Mammary epithelial cell (primary cell): ENCODE measurements at regions of chr19 and their contacts with region 1.

Region 1: DNA sequence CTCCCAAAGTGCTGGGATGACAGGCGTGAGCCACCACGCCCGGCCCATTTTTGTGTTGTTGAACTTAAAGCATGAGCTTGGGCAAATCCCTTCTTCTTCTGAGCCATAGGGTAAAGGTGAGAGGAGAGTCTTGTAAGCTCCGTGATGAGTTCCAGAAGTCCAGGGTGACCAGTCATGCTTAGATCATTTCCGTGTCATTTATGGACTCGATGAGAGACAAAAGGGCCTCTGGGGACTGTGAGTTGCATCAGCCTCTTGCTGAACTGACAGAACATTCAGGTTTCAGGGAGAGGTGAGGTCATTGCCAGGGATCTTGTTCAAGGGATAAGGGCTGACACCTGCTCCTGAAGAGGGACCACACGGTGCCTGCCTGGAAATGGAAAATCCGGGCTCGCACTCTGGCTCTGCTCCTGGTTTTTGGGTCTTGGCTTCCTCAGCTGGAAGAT is 53.6 kb downstream of the GADD45B start:
- DNase-seq: peak; percentile 98
- H3K4me3 ChIP-seq: no peak overlapping the region
- H3K27ac ChIP-seq: peak overlapping the region; percentile 49
- H3K4me1 ChIP-seq: peaks cover 45% of the 10 kb centered on the region
- H3K27me3 ChIP-seq: no peaks in the 10 kb centered on the region
- CTCF ChIP-seq: no peak

Region 2: DNA sequence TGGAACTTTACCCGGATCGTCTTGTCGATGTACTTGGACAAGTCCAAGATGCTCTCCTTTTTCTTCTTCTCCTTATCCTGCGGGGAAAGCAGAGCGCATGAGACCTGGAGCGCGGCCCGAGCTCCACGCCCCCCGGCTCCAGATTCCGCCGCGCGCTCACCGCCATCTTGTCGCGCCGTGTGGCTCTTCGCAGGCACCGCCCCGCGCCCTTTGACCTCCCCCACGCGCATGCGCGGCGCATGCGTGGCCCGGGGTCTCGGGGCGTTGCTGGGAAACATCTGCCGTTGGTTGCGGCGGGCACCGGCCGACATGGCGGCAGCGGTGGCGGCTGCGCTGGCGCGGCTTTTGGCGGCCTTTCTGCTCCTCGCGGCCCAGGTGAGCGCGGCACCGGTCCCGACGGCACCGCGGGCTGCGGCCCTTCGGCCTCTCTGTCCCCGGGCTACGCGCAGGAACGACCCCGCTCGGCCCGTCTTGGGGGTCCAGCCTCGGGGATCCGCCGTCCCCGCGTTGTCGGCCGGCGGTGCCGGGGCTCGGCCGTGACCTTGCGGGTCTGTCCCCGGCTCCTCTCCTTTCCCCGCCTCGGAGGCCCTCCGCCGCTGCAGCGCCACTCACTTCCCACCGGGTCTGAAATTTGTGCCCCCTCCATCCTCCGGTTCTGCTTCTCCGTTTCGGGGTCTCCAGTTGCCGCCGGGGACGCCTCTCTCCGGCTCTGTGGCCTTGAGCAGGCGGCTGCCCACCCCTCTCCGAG is 200.9 kb before region 1 on chr19 and contains the starts of genes LSM7 and SPPL2B:
- CTCF ChIA-PET with region 1: no interaction called
- dilution Hi-C with region 1: no loop called
- in situ Hi-C with region 1: no loop called
- intact Hi-C with region 1: no loop called
- DNase-seq: peak; percentile 83
- H3K4me3 ChIP-seq: peak within 1 kb of the TSS; percentile 69 to 81 (median 81)
- H3K27ac ChIP-seq: peak within 1 kb of the TSS; percentile 79
- H3K4me1 ChIP-seq: peaks cover 13% of the 10 kb centered on the region
- H3K27me3 ChIP-seq: no peaks in the 10 kb centered on the region
- CTCF ChIP-seq: no peak
- total RNA-seq, gene LSM7: 67.7 to 91.6 TPM
- total RNA-seq, gene SPPL2B: 21.8 to 50.7 TPM

Region 3: GRCh38 chr19:2491130-2491801 is 38.2 kb before region 1 on chr19:
- CTCF ChIA-PET with region 1: no interaction called
- dilution Hi-C with region 1: no loop called
- in situ Hi-C with region 1: no loop called
- intact Hi-C with region 1: loop called (anchors 2 kb)
- DNase-seq: peak; percentile 78
- H3K4me3 ChIP-seq: no peak overlapping the region
- H3K27ac ChIP-seq: peak overlapping the region; percentile 49
- H3K4me1 ChIP-seq: peaks cover 42% of the 10 kb centered on the region
- H3K27me3 ChIP-seq: no peaks in the 10 kb centered on the region
- CTCF ChIP-seq: no peak

Region 4: DNA sequence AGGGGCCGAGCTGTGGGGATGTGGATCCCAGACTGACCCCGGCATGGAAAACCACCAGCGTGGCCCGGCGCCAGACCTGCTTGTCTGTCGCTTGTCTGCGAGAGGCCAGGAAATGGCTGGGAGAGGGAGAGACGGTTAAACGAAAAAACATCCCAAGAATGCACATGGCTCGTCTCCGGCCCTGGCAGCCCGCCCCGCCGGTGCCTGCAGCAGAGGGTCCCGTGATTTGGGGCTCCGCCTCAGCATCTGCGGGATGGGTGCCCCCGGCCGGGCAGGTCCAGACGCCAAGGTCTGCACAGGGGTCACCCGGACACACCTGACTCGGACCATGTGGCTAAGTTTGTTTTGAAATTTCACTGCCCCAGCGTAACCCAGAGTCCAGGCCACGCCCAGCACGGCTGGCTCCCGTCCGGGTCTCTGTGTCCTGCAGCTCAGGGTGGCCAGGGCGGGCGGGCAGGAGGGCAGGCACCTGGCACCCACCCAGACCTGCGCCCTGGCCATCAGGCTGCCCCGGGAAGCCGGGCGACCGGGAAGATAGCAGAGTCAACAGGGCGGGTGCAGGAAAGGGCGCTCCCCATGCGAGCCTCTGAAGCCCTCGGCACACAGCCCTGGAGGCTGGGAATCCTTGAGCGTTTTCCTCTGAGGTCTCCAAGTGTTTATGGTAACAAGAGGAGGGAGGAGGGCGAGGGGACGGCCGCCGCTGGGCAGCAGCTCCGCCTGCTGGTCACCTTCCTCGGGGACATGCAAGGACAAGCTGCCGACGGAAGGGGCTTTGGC is 49.6 kb after region 1 on chr19:
- CTCF ChIA-PET with region 1: no interaction called
- dilution Hi-C with region 1: no loop called
- in situ Hi-C with region 1: no loop called
- intact Hi-C with region 1: loop called (anchors 2 kb)
- DNase-seq: peak; percentile 69
- H3K4me3 ChIP-seq: peak overlapping the region; percentile 26 to 53 (median 50)
- H3K27ac ChIP-seq: no peak overlapping the region
- H3K4me1 ChIP-seq: peaks cover 20% of the 10 kb centered on the region
- H3K27me3 ChIP-seq: no peaks in the 10 kb centered on the region
- CTCF ChIP-seq: peak; percentile 62 to 87